Activated T-helper 2 cell treated with anti-CD3 and anti-CD28 coated beads, Interferon-gamma antibody, Interleukin-2, Interleukin-4, amounts not matched to agents 10 μg/mL and 5 μg/mL and 100 μg/mL, durations not matched to agents 14 hours and 24 hours and 36 hours (primary cell): ENCODE measurements at regions of chr13 and their contacts with region 1.

Region 1: DNA sequence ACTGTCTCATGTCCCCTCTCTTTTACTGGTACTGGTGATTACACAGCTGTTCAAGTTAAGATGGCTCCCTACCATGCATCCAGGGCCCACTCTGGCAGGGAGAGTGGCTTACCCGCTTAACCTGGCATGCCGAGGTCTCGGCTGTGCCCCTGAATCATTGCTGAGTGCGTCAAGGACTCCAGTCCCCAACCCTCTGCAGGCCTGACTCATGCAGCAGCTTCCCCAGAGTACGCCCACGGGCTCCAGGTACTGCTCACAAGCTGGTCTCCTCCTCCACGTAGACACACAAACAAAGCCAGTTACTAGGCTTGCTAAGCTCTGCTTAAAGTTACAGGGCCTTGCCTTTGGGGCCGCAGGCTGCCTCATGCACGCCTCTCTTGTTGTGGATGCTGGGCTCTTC is 447.4 kb downstream of the COG6 start:
- DNase-seq: no peak
- H3K4me3 Mint-ChIP-seq: peak overlapping the region; percentile 60
- H3K27ac Mint-ChIP-seq: peak overlapping the region; percentile 96
- H3K4me1 Mint-ChIP-seq: peaks cover 47% of the 10 kb centered on the region
- H3K27me3 Mint-ChIP-seq: no peaks in the 10 kb centered on the region

Region 2: DNA sequence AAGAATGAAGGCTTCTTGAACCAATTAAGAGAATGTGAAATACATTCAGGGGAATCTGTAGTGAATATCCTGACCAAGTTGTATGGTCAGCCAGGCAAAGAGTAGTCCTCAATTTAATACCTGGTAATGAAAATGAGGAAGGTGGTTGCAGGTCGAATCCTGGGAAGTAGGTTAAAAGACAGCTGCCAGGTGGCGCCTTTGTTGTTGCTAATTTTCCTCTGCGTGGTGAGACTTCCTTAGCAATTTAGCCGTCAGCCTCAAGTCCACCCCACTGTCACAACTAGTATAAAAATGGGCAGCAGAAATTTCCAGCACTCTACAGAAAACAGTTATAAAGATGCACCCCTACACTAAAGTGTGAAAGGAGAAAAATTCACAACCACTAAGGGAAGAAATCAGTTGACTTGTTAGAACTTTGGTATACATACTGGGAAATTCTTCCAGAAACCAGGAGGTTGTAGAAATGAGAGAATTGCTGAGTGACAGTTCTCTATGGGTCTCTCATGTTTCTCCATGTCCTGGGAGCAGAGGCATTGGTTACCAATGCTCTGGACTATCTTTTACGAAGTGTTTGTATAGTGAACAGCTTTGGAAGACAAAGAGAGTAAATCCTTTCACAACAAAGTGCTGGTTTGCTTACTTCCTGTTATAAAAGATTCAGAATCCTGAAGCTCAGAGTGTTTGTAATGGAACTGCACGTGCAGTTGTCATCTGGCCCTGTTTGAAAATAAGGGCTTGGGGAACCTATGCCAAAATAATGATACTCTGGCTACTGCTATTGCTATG is 828.7 kb before region 1 on chr13:
- intact Hi-C with region 1: no loop called
- DNase-seq: no peak
- H3K4me3 Mint-ChIP-seq: no peak overlapping the region
- H3K27ac Mint-ChIP-seq: no peak overlapping the region
- H3K4me1 Mint-ChIP-seq: no peaks in the 10 kb centered on the region
- H3K27me3 Mint-ChIP-seq: peaks cover 10% of the 10 kb centered on the region

Region 3: DNA sequence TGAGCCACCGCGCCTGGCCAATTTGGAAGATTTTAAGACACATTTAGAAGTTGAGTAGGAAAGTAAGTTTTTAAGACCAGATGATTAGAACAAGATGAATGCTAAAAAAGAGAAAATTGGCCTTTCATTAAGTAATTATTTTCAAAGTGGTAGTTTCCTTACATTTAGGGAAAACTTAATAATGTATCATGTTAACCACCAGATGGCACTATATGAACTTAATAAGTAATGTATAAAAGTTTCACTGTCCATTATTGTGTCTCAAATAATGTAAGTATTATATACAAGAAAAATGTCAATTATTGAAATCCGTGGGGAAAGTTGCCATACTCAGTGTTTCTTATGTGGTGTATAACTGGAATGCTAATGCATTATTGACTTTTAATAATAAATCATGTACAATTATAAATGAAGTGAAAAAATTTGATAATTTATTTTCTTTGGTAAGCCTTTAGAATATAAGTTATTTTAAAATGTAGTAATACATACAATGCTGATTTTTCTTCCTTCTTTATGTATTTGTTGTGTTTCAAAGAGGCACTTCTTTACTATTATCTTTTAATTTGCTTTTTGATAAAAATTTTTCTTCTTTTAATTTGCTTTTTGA is 418.2 kb before region 1 on chr13:
- intact Hi-C with region 1: loop called (anchors 10 kb)
- DNase-seq: no peak
- H3K4me3 Mint-ChIP-seq: no peak overlapping the region
- H3K27ac Mint-ChIP-seq: no peak overlapping the region
- H3K4me1 Mint-ChIP-seq: peaks cover 27% of the 10 kb centered on the region
- H3K27me3 Mint-ChIP-seq: no peaks in the 10 kb centered on the region

Region 4: DNA sequence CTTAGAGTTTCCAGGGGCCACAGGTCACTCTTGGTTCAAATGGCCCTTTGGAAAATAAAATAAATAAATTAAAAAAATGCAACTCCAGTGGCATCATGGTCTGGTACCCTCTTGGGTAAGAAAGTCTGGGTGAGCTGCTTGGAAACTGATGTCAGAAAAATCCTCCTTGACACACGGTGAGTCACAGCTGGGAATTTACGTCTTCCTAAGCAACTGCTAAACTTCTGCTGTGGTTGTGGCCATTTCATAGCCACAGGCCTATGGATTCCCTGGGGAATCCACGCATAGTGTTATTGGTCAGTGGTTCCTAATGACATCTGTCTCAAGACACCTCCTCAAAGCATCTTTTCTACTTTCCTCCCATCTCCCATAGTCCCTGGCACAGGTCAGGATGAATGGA is 226.6 kb before region 1 on chr13:
- intact Hi-C with region 1: no loop called
- DNase-seq: no peak
- H3K4me3 Mint-ChIP-seq: no peak overlapping the region
- H3K27ac Mint-ChIP-seq: no peak overlapping the region
- H3K4me1 Mint-ChIP-seq: peaks cover 15% of the 10 kb centered on the region
- H3K27me3 Mint-ChIP-seq: no peaks in the 10 kb centered on the region

Region 5: DNA sequence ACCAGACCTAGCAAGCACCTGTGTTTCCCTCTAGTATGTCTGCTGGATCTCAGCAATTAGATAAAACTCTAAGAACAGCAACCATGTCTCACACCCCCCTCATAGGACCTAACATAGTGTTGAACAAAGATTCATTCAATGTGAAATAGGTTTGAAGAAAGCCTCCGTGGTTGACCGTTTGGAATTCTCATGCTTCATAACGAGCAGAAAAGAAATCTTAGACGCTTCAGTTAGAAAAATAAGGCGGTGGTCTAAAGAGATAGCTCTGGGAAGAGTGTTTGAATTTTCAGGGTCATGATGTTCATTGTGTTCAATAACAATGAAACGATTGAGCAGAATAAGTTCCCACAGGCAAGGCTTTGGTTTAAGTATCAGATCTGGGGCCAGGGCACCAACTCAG is 114.5 kb before region 1 on chr13:
- intact Hi-C with region 1: no loop called
- DNase-seq: no peak
- H3K4me3 Mint-ChIP-seq: no peak overlapping the region
- H3K27ac Mint-ChIP-seq: no peak overlapping the region
- H3K4me1 Mint-ChIP-seq: no peaks in the 10 kb centered on the region
- H3K27me3 Mint-ChIP-seq: no peaks in the 10 kb centered on the region

Region 6: GRCh38 chr13:40026174-40026585 is 76.7 kb before region 1 on chr13:
- intact Hi-C with region 1: loop called (anchors 1 kb)
- DNase-seq: peak; percentile 64
- H3K4me3 Mint-ChIP-seq: no peak overlapping the region
- H3K27ac Mint-ChIP-seq: peak overlapping the region; percentile 55
- H3K4me1 Mint-ChIP-seq: peaks cover 42% of the 10 kb centered on the region
- H3K27me3 Mint-ChIP-seq: no peaks in the 10 kb centered on the region

Region 7: GRCh38 chr13:40149611-40150274 is 46.9 kb after region 1 on chr13:
- intact Hi-C with region 1: loop called (anchors 2 kb)
- DNase-seq: no peak
- H3K4me3 Mint-ChIP-seq: no peak overlapping the region
- H3K27ac Mint-ChIP-seq: peak overlapping the region; percentile 40
- H3K4me1 Mint-ChIP-seq: peaks cover 55% of the 10 kb centered on the region
- H3K27me3 Mint-ChIP-seq: no peaks in the 10 kb centered on the region

Region 8: GRCh38 chr13:40221460-40222201 is 118.8 kb after region 1 on chr13:
- intact Hi-C with region 1: loop called (anchors 1 kb)
- DNase-seq: peak; percentile 17
- H3K4me3 Mint-ChIP-seq: peak overlapping the region; percentile 1
- H3K27ac Mint-ChIP-seq: peak overlapping the region; percentile 83
- H3K4me1 Mint-ChIP-seq: peaks cover 38% of the 10 kb centered on the region
- H3K27me3 Mint-ChIP-seq: peaks cover 2% of the 10 kb centered on the region

Region 9: GRCh38 chr13:40388617-40389016 is 285.8 kb after region 1 on chr13:
- intact Hi-C with region 1: loop called (anchors 2 kb)
- DNase-seq: peak; percentile 83
- H3K4me3 Mint-ChIP-seq: peak overlapping the region; percentile 80
- H3K27ac Mint-ChIP-seq: peak overlapping the region; percentile 98
- H3K4me1 Mint-ChIP-seq: peaks cover 38% of the 10 kb centered on the region
- H3K27me3 Mint-ChIP-seq: no peaks in the 10 kb centered on the region

Region 10: DNA sequence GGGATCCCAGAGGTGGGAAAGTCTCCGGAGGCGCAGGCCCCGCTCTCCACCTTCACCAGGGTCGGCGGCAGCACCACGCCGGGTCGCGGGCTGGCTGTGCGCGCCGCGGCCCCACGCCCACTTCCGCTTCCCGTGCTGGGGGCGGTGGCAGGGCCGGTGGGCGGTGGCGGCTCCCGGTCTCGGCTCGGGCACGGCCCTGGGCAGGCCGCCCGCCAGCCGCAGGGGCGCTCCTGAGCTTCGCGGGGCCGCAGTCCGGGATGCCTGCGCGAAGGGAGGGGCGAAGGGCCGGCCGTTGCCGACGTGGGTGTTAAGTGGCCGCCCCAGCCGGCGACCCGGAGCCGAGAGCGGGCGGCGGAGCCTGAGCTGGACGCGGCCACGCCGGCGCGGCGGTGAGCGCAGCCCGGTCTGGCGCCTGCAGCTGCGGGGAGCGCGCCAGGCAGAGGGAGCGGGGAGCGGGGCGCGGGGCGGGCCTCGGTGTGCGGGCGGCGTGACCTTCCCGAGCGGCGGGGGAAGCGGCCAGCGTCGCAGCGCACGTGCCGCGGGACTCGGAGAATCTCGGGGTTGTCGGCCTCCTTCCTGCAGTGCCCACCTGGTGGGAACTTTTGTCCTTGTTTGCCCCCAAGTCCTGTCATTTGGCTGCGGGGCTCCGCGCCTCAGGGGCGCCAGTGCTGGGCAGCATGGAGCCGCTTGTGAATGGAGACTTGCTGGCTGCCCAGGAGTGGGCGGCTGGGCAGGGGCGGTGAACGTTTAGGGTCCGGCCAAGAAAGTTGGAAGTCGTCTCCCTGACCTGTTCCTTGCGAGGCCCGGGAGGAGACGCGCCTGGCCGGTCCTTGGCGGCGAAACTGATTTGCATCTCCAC is 686.6 kb after region 1 on chr13 and contains the start of gene SLC25A15:
- intact Hi-C with region 1: loop called (anchors 10 kb)
- DNase-seq: peak; percentile 62
- H3K4me3 Mint-ChIP-seq: peak within 1 kb of the TSS; percentile 73
- H3K27ac Mint-ChIP-seq: peak within 1 kb of the TSS; percentile 76
- H3K4me1 Mint-ChIP-seq: peaks cover 36% of the 10 kb centered on the region
- H3K27me3 Mint-ChIP-seq: no peaks in the 10 kb centered on the region
- total RNA-seq, gene SLC25A15: 21.8 and 24.1 TPM in 2 replicates